OCI-LY7 (cell line): ENCODE measurements at regions of chr9 and their contacts with region 1.

Region 1: DNA sequence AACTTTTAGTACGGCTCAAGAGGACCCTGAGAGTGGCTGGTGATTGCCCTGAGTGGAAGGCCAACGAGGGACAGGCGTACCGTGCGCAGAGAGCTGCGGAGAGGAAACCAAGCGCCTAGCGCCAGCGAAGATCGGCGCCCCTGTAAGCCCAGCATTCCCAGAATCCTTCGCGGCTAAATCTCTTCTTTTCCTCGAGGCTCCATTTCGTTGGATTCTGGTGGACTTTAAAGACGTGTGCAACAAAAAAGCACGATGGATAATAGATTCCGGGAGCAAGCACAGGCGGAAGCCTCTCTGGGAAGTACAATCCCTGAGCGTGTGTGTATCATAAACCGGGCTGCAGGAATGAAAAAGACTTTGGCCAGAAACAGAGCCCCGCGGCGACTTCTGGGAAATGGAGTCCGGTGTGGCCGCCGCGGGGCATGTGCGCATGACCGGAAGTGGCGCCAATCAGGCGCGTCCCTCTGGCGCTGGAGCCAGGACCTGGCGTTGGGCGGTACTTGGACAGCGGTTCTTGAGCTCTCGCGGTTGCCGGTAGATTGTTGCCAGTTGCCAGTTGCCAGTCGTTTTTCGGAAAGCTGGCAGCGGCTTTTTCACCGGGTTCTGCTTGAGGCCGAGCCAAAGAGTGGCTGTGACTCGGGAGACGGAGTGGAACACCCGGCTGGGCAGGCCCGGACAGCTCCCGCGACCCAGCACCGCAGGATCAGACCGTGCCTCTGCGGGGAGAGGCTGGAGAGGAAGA is at the start of gene ZNF79:
- DNase-seq: peak; percentile 89
- H3K4me3 ChIP-seq: peak within 1 kb of the TSS; percentile 84
- H3K27ac ChIP-seq: peak within 1 kb of the TSS; percentile 41
- H3K4me1 ChIP-seq: peaks cover 22% of the 10 kb centered on the region
- CTCF ChIP-seq: 0 out of 2 replicates have a peak, but pooled peaks have one; percentile 3
- total RNA-seq, gene ZNF79: 14.1 and 14.9 TPM in 2 replicates

Region 2: GRCh38 chr9:127450830-127451724 is 27.0 kb after region 1 on chr9 and contains the starts of genes LRSAM1 and RPL12:
- CTCF ChIA-PET with region 1: no interaction called
- POLR2A ChIA-PET with region 1: interaction called, 5 read pairs
- intact Hi-C with region 1: loop called (anchors 1 kb)
- DNase-seq: peak; percentile 96
- H3K4me3 ChIP-seq: peak within 1 kb of the TSS; percentile 99
- H3K27ac ChIP-seq: peak within 1 kb of the TSS; percentile 92
- H3K4me1 ChIP-seq: peaks cover 39% of the 10 kb centered on the region
- CTCF ChIP-seq: 0 out of 2 replicates have a peak, but pooled peaks have one; percentile 22
- total RNA-seq, gene LRSAM1: 13.6 and 20.8 TPM in 2 replicates
- total RNA-seq, gene RPL12: 1,855 and 1,868 TPM in 2 replicates

Region 3: DNA sequence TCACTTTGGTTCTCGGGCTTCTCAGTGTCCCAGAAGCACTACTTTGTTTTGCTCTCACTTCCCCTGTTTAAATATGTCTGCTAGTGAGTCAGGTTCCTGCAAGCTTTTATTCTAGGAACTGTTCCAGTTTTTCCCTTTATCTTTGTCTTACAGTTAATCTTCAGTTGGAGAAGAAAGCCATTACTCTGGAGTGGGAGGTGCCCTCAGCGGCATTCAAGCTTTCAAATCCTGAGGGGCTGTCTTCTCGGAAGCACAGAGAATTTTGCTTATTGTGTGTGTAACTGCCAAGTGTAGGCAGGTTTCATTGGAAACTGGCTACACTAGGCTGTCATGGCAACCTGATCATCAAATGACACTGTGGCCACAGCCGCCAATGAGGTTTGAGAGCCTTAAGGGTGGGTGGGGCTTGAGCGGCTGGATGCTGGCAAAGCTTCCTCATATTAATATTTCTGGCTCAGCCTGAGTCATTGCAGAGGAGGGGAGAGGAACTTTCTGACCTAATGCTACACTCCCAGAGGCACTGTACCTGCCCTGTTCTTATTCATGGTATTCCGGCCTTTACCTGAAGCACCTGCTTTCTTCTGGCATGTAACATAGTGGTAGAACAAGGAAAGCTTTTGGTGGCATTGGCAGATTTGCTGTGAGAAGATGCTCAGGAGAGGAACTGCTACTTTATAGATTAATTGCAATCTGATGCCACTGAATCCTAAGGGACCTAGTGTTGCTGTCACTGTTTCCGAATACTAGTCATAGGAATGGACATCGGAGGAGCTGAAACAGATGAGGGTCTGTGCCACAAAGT is 670.3 kb after region 1 on chr9:
- CTCF ChIA-PET with region 1: no interaction called
- POLR2A ChIA-PET with region 1: no interaction called
- intact Hi-C with region 1: no loop called
- DNase-seq: peak; percentile 58
- H3K4me3 ChIP-seq: no peak overlapping the region
- H3K27ac ChIP-seq: no peak overlapping the region
- H3K4me1 ChIP-seq: peaks cover 23% of the 10 kb centered on the region
- CTCF ChIP-seq: no peak